Endothelial cell of umbilical vein (primary cell): ENCODE measurements at regions of chr12 and their contacts with region 1.

Region 1: GRCh38 chr12:71754461-71755145 is at the start of gene RAB21:
- DNase-seq: peak; percentile 96
- H3K4me3 ChIP-seq: peak within 1 kb of the TSS; percentile 43 to 90 (median 67)
- H3K27ac ChIP-seq: peak within 1 kb of the TSS; percentile 73
- H3K4me1 ChIP-seq: peaks cover 16% of the 10 kb centered on the region
- H3K27me3 ChIP-seq: peaks cover 6 to 30% of the 10 kb centered on the region in 2 experiments
- CTCF ChIP-seq: peak in 1 of 2 donors; percentile 28
- POLR2A ChIP-seq: peak; percentile 88
- total RNA-seq, gene RAB21: 44.8 and 49.6 TPM in 2 replicates

Region 2: DNA sequence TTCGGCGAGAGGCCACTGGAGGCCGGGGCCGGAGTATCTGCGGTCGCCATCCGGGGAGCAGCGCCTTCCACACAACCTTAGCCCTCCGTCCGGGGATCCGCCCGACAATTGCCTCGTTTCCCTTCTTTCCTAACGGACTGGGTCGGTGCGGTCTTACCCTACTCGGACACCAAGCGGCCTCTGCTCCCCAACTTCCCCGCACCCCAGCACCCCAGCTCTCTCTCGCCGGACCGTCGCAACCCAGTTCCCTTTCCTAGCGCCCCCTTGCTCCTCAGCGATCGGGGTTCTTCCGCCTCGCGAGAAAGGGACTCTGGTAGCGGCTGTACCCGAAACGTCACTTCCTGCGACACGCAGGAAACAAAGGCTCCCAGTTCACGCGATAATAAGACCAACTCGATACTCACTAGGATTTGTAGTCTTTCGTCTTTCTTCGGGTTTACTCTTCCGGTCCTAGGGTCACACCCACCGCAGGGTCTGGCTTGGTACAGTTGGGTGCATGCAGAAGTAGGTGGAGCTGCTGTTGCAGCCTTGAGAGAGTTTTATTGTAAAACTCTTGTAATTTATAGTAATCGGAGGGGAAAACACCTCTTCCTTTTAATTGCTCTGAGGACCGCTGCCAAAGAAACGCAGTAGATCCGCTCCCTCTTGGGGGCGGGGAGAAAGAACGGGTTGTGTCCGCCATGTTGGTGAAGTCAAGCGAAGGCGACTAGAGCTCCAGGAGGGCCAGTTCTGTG is 90.9 kb before region 1 on chr12 and contains the start of gene ZFC3H1:
- CTCF ChIA-PET with region 1: interaction called, 3 read pairs
- POLR2A ChIA-PET with region 1: interaction called, 4 read pairs
- dilution Hi-C with region 1: no loop called
- intact Hi-C with region 1: loop called (anchors 1 kb)
- DNase-seq: peak; percentile 99
- H3K4me3 ChIP-seq: peak within 1 kb of the TSS; percentile 81 to 98 (median 92)
- H3K27ac ChIP-seq: peak within 1 kb of the TSS; percentile 56
- H3K4me1 ChIP-seq: peaks cover 17% of the 10 kb centered on the region
- H3K27me3 ChIP-seq: no peaks in the 10 kb centered on the region
- CTCF ChIP-seq: peak in 1 of 2 donors; percentile 31
- POLR2A ChIP-seq: peak; percentile 73
- total RNA-seq, gene ZFC3H1: 47.6 and 60.4 TPM in 2 replicates

Region 3: DNA sequence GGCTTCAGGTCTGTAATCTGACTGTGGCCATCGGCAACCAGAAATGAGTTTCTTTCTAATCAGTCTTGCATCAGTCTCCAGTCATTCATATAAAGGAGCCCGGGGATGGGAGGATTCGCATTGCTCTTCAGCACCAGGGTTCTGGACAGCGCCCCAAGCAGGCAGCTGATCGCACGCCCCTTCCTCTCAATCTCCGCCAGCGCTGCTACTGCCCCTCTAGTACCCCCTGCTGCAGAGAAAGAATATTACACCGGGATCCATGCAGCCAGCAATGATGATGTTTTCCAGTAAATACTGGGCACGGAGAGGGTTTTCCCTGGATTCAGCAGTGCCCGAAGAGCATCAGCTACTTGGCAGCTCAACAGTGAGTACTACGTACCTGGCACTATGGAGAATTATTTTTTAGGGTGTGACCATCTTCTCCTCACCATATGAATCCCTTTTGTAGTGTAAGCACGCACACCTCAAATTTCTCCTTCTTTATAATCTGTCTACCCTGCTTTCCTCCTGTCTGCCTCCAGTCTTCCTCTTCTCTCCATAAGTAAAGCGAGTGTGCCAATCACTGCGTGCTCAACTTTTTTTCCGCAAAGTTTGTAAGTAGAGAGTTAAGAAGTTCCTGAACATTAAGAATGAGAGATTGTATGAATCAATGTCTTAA is 184.3 kb after region 1 on chr12 and contains the start of gene TPH2:
- CTCF ChIA-PET with region 1: interaction called, 3 read pairs
- POLR2A ChIA-PET with region 1: no interaction called
- dilution Hi-C with region 1: no loop called
- intact Hi-C with region 1: loop called (anchors 1 kb)
- DNase-seq: peak; percentile 83
- H3K4me3 ChIP-seq: no peak within 1 kb of the TSS
- H3K27ac ChIP-seq: no peak within 1 kb of the TSS
- H3K4me1 ChIP-seq: no peaks in the 10 kb centered on the region
- H3K27me3 ChIP-seq: peaks cover 2 to 6% of the 10 kb centered on the region in 2 experiments
- CTCF ChIP-seq: peak; percentile 71 to 77
- POLR2A ChIP-seq: no peak
- total RNA-seq, gene TPH2: not detected in 2 replicates